ENCODE measurements at regions of chr2 and their contacts with region 1.

Region 1: GRCh38 chr2:205776139-205776538 is 93.8 kb downstream of the NRP2 start:
- DNase-seq: no peak
- H3K4me3 ChIP-seq: no peak overlapping the region
- H3K27ac ChIP-seq: no peak overlapping the region
- H3K4me1 ChIP-seq: no peaks in the 10 kb centered on the region
- H3K27me3 ChIP-seq: peaks cover 0 to 3% (median 0%) of the 10 kb centered on the region in 7 donors
- CTCF ChIP-seq: peak in 9 of 11 experiments; percentile 21 to 61 (median 44)
- POLR2A ChIP-seq: no peak

Region 2: DNA sequence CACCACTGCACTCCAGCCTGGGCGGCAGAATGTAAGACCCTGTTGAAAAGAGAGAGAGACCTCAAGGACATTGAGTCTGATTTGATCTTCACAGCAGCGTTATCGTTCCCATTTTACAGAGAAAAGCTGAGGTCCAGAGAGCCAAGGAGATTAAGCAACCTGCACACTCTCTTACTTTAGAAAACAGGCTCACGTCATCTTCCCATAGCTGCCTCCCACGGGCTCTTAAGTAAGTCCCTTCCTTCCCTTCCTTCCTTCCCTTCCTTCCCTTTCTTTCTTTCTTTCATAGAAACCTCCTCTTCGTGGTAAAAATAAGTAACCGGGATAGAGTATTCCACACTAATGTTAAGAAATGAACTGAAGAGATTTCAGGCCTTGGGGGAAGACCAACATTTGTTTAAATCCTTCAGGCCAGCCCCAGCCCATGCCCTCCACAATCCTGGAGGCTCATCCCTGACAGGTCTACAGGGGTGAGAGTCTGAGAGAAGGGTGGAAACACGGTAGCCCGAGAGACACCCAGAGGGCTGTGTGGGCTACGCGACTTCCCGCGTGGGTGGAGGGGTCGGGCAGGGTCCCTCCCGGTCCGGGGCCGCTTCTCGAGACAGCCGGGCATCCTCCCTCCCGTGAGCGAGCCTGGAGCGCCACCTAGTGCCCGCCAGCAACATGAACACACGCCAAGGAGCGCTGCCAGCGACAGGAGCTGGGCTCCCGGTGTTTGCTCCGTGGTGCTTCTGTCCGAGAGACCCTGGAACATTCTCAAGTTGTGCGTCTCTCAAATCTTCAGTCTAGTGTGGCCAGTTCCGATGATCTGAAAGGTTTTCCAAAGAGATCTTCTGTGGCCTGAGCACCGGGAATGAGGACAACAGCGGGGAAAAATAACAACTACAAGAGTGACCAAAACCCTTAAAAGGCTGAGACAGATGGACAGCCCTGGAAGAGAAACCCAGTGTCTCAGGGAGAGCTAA is 149.5 kb after region 1 on chr2:
- intact Hi-C with region 1: loop called (anchors 10 kb)
- DNase-seq: peak; percentile 94
- H3K4me3 ChIP-seq: peak overlapping the region in 4 of 8 donors; percentile 9 to 52 (median 18)
- H3K27ac ChIP-seq: peak overlapping the region in 1 of 8 donors; percentile 17
- H3K4me1 ChIP-seq: peaks cover 0 to 30% (median 17%) of the 10 kb centered on the region in 6 donors
- H3K27me3 ChIP-seq: peaks cover 0 to 49% (median 5%) of the 10 kb centered on the region in 7 donors
- CTCF ChIP-seq: peak; percentile 46 to 93 (median 87)
- POLR2A ChIP-seq: no peak